Ascending aorta (tissue), 2 donors: ENCODE measurements at regions of chr16 and their contacts with region 1.

Region 1: GRCh38 chr16:87316923-87317749 is at the start of gene C16orf95:
- DNase-seq: peak; percentile 80 to 98
- H3K4me3 ChIP-seq: peak within 1 kb of the TSS; percentile 82 to 98
- H3K27ac ChIP-seq: peak within 1 kb of the TSS; percentile 95 to 96
- H3K4me1 ChIP-seq: peaks cover 6% of the 10 kb centered on the region in 2 donors
- H3K27me3 ChIP-seq: no peaks in the 10 kb centered on the region
- CTCF ChIP-seq: peak in 2 of 3 experiments; percentile 69 to 73
- total RNA-seq, gene C16orf95: not detected

Region 2: GRCh38 chr16:86554917-86555703 is 762.0 kb before region 1 on chr16 and contains the start of gene MTHFSD:
- intact Hi-C with region 1: loop called (anchors 2 kb)
- DNase-seq: peak; percentile 65 to 96
- H3K4me3 ChIP-seq: peak within 1 kb of the TSS; percentile 77 to 89
- H3K27ac ChIP-seq: peak within 1 kb of the TSS; percentile 88 to 89
- H3K4me1 ChIP-seq: peaks cover 3 to 13% of the 10 kb centered on the region in 2 donors
- H3K27me3 ChIP-seq: no peaks in the 10 kb centered on the region
- CTCF ChIP-seq: no peak
- total RNA-seq, gene MTHFSD: 44.1 TPM